Ovary (tissue), 10 donors: ENCODE measurements at regions of chr18 and their contacts with region 1.

Region 1: GRCh38 chr18:21242141-21242779 is at the start of gene GREB1L:
- DNase-seq: peak; percentile 74 to 90 (median 79)
- H3K4me3 ChIP-seq: peak within 1 kb of the TSS; percentile 69
- H3K27ac ChIP-seq: peak within 1 kb of the TSS; percentile 74 to 82
- H3K4me1 ChIP-seq: no peaks in the 10 kb centered on the region
- H3K27me3 ChIP-seq: no peaks in the 10 kb centered on the region
- CTCF ChIP-seq: peak; percentile 23 to 62 (median 28)
- EP300 ChIP-seq: no peak
- POLR2A ChIP-seq: no peak
- total RNA-seq, gene GREB1L: 8.9 to 22.8 (median 11.5) TPM

Region 2: GRCh38 chr18:21111341-21112139 is 130.7 kb before region 1 on chr18 and contains the start of gene ROCK1:
- intact Hi-C with region 1: loop called in 1 of 4 experiments (anchors 5 kb)
- DNase-seq: peak; percentile 99 to 100 (median 99)
- H3K4me3 ChIP-seq: peak within 1 kb of the TSS; percentile 59
- H3K27ac ChIP-seq: peak within 1 kb of the TSS; percentile 92 to 94
- H3K4me1 ChIP-seq: peaks cover 5% of the 10 kb centered on the region
- H3K27me3 ChIP-seq: no peaks in the 10 kb centered on the region
- CTCF ChIP-seq: no peak
- EP300 ChIP-seq: no peak
- POLR2A ChIP-seq: peak; percentile 75
- total RNA-seq, gene ROCK1: 35.0 to 47.7 (median 43.5) TPM

Region 3: GRCh38 chr18:21298351-21298750 is 56.1 kb after region 1 on chr18:
- intact Hi-C with region 1: loop called in 1 of 4 experiments (anchors 5 kb)
- DNase-seq: no peak
- H3K4me3 ChIP-seq: no peak overlapping the region
- H3K27ac ChIP-seq: no peak overlapping the region
- H3K4me1 ChIP-seq: peaks cover 3% of the 10 kb centered on the region
- H3K27me3 ChIP-seq: no peaks in the 10 kb centered on the region
- CTCF ChIP-seq: no peak
- EP300 ChIP-seq: no peak
- POLR2A ChIP-seq: no peak

Region 4: DNA sequence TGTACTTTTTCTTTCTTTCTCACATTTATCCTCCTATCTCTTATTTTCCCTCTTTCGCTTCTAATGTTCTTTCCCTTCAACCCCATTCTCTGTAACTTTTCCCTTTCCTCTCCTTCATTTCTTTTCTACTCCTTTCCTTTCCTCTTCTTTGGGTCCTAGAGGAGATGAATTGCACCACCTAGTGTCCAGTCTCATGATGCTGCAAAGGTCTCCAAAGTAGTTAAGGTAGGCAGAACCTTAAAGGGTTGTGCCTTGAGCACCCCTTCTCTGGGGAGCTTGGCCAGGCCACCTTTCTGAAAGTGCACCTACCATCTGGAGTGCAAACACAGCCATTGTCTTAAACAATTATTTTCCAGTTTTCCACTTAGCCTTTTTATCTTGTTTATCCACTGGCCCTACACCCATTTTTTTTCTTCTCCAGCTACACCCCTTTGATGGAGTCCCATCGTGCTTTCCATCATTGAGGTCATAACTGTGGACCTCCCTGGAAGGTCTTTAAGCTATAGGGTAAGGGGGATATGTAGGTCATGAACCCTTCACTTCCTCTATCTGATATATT is 202.3 kb after region 1 on chr18:
- intact Hi-C with region 1: loop called in 1 of 4 experiments (anchors 5 kb)
- DNase-seq: peak in 3 of 5 donors; percentile 23 to 51 (median 35)
- H3K4me3 ChIP-seq: no peak overlapping the region
- H3K27ac ChIP-seq: no peak overlapping the region
- H3K4me1 ChIP-seq: no peaks in the 10 kb centered on the region
- H3K27me3 ChIP-seq: no peaks in the 10 kb centered on the region
- CTCF ChIP-seq: peak; percentile 54 to 72 (median 57)
- EP300 ChIP-seq: no peak
- POLR2A ChIP-seq: no peak

Region 5: DNA sequence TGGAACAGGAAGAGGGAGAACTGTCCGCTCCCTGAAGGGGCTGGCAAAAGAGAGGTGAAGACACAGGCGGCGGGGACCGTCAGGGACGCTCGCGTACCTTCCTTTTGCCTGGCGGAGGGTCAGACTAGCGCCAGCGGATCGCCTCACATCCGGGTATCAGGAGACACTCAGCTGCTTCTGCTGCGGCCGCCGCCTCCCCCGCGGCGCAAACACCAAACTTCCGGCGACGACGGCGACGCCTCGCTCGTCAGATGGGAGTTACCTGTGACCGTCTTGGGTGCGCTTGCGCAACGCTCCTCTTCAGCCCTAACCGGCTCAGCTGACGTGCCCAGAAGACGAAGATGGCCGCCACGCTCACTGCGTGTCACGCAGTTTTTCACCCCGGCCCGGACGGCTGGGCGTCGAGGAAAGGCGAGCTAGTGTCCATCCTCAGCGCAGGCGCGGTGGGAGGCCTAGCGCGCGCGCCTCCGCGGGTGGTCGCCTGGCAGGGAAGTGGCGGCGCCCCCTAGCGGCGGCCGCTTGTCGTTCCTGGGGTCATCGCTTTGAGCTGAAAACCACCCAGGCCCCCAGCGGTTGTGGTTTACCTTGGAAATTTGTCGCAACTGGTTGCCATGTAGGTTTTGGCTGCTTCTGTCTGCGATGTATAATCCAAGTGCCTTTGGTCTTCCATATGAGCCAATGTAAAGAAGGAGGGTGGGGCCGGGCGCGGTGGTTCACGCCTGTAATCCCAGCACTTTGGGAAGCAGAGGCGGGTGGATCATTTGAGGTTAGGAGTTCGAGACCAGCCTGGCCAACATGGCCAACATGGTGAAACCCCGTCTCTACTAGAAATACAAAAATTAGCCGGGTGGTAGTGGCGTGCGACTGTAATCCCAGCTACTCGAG is 358.5 kb after region 1 on chr18 and contains the start of gene ESCO1:
- intact Hi-C with region 1: loop called in 1 of 4 experiments (anchors 5 kb)
- DNase-seq: peak; percentile 94 to 97 (median 95)
- H3K4me3 ChIP-seq: peak within 1 kb of the TSS; percentile 96
- H3K27ac ChIP-seq: peak within 1 kb of the TSS; percentile 36 to 93
- H3K4me1 ChIP-seq: peaks cover 3% of the 10 kb centered on the region
- H3K27me3 ChIP-seq: no peaks in the 10 kb centered on the region
- CTCF ChIP-seq: peak; percentile 96 to 99 (median 98)
- EP300 ChIP-seq: peak; percentile 63
- POLR2A ChIP-seq: peak; percentile 78
- total RNA-seq, gene ESCO1: 10.9 to 21.3 (median 16.9) TPM

Region 6: DNA sequence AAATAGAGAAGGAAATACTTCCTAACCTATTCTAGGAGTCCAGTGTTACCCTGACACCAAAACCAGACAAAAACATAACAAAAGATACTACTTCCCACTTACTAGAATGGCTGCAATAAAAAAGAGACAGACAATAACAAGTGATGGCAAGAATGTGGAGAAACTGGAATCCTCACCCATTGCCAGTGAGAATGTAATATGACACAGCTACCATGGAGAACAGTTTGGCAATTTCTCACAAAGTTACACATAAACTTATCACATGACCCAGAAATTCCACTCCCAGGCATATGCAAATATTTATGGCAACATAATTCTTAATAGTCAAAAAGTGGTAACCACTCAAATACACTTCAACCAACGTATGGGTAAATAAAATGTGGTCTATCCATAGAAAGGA is 1385.3 kb after region 1 on chr18:
- intact Hi-C with region 1: no loop called
- DNase-seq: no peak
- H3K4me3 ChIP-seq: no peak overlapping the region
- H3K27ac ChIP-seq: no peak overlapping the region
- H3K4me1 ChIP-seq: no peaks in the 10 kb centered on the region
- H3K27me3 ChIP-seq: no peaks in the 10 kb centered on the region
- CTCF ChIP-seq: no peak
- EP300 ChIP-seq: no peak
- POLR2A ChIP-seq: no peak